ENCODE measurements at regions of chr1 and their contacts with region 1.

Region 1: DNA sequence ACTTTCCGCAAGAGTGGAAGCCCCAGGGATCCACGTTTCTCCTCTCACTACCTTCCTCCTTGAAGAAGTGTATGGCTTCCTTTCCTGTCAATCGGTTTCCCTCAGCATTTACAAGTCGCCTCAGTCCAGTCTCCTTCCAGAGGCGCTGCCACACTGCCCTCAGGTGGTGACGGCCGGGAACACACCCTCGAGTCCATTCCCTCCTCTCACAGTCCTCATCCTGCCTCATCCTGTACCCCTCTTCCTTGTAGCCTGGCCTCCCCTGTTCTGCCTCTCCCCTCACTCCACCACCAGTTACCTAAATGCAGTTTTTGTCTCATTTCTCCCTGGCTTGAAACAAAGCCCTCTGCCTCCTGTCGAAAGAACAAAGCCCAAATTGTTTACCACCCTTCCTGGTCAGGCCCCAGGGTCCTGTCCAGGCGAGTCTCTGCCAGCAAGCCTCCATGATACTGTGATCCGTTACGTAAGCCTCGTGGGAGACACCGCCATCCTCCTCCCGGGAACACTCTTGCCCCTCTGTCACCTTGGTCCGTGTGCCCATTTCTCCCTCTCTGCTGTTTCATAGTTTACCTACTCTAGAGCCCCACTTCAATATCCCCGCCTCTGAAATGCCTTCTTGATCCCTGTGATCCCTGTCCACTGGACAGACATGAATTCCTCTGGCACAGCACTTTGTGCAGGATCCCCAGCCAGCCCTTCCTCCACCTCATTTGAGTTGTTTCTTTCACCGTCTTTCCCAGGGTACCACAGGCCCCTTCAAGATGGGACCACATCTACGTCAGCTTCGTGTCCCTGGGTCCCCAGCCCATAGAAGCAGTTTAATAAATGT is 23.3 kb upstream of the LSM10 start:
- DNase-seq: peak; percentile 90
- H3K4me3 ChIP-seq: no peak overlapping the region
- H3K27ac ChIP-seq: no peak overlapping the region
- H3K4me1 ChIP-seq: peaks cover 3% of the 10 kb centered on the region
- H3K27me3 ChIP-seq: no peaks in the 10 kb centered on the region
- CTCF ChIP-seq: peak; percentile 96 to 97
- POLR2A ChIP-seq: no peak

Region 2: GRCh38 chr1:36099681-36100341 is 321.2 kb before region 1 on chr1:
- CTCF ChIA-PET with region 1: no interaction called
- POLR2A ChIA-PET with region 1: no interaction called
- dilution Hi-C with region 1: no loop called
- intact Hi-C with region 1: loop called (anchors 1 kb)
- DNase-seq: peak; percentile 65
- H3K4me3 ChIP-seq: no peak overlapping the region
- H3K27ac ChIP-seq: no peak overlapping the region
- H3K4me1 ChIP-seq: no peaks in the 10 kb centered on the region
- H3K27me3 ChIP-seq: no peaks in the 10 kb centered on the region
- CTCF ChIP-seq: peak; percentile 84
- POLR2A ChIP-seq: no peak

Region 3: DNA sequence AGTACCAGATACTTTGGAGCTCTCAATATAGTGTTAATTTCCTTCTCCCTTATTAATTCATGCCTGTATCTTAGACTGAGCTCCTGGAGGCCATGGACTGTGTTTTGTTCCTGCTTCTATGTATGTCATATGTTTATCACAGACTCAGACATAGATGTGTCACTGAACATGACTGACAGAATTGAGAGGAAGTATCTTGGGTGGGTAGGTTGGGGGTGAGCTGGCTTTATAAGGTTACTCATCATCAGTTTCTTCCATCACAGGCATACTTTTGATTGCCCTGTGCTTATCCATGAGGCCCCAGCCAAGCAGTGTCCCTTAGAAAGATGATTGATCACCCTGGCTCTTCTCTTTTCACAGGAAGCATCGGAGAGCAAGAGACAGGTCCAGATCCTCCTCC is 120.5 kb before region 1 on chr1:
- CTCF ChIA-PET with region 1: interaction called, 11 read pairs
- POLR2A ChIA-PET with region 1: no interaction called
- dilution Hi-C with region 1: no loop called
- intact Hi-C with region 1: no loop called
- DNase-seq: no peak
- H3K4me3 ChIP-seq: no peak overlapping the region
- H3K27ac ChIP-seq: peak overlapping the region; percentile 1
- H3K4me1 ChIP-seq: peaks cover 15% of the 10 kb centered on the region
- H3K27me3 ChIP-seq: no peaks in the 10 kb centered on the region
- CTCF ChIP-seq: no peak
- POLR2A ChIP-seq: no peak

Region 4: DNA sequence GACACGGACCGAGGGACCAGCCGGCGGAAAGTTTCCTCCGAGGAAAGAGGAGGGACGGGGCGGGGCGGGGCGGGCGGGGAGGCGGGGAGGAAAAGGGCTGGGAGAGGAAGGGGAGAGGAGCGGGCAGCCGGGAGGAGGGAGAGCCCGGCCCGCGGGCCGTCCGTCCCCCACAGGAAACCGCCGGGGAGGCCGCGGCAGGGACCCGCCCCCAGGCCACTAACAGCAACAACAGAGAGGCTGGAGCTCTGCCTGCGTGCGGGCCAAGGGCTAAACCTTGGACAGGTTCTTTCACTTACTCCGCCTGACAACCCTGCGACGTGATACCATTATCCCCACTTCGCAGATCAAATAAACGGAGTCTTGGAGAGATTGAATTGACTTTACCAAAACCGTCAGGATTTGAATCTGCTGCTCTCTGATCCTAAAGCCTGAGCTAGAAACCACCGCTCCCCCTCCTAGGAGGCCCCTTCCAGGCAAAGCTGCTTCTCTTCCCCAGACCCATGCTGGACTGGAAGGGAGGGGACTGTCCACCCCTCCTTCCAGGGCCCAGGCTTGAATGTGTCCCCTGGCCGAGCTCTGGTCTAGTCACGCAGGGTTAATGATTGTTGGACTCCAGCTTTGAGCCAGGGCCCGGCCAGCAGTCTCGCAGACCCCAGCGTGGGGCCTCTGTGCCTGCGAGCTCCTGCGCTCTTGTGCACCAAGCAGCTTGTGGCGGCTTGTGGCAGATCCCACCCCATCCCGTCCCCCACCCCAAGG is 97.3 kb before region 1 on chr1 and contains the start of gene EVA1B:
- CTCF ChIA-PET with region 1: no interaction called
- POLR2A ChIA-PET with region 1: no interaction called
- dilution Hi-C with region 1: no loop called
- intact Hi-C with region 1: loop called (anchors 1 kb)
- DNase-seq: peak; percentile 90
- H3K4me3 ChIP-seq: peak within 1 kb of the TSS; percentile 61 to 85 (median 71)
- H3K27ac ChIP-seq: peak within 1 kb of the TSS; percentile 62
- H3K4me1 ChIP-seq: peaks cover 15% of the 10 kb centered on the region
- H3K27me3 ChIP-seq: no peaks in the 10 kb centered on the region
- CTCF ChIP-seq: no peak
- POLR2A ChIP-seq: no peak
- total RNA-seq, gene EVA1B: 63.2 and 64.7 TPM in 2 replicates

Region 5: GRCh38 chr1:36350659-36351226 is 70.3 kb before region 1 on chr1:
- CTCF ChIA-PET with region 1: interaction called, 11 read pairs
- POLR2A ChIA-PET with region 1: no interaction called
- dilution Hi-C with region 1: no loop called
- intact Hi-C with region 1: no loop called
- DNase-seq: peak; percentile 85
- H3K4me3 ChIP-seq: no peak overlapping the region
- H3K27ac ChIP-seq: peak overlapping the region; percentile 89
- H3K4me1 ChIP-seq: peaks cover 49% of the 10 kb centered on the region
- H3K27me3 ChIP-seq: no peaks in the 10 kb centered on the region
- CTCF ChIP-seq: no peak
- POLR2A ChIP-seq: no peak

Region 6: GRCh38 chr1:36385410-36386257 is 35.4 kb before region 1 on chr1 and contains the start of gene STK40:
- CTCF ChIA-PET with region 1: interaction called, 4 read pairs
- POLR2A ChIA-PET with region 1: no interaction called
- dilution Hi-C with region 1: no loop called
- intact Hi-C with region 1: loop called (anchors 1 kb)
- DNase-seq: peak; percentile 99
- H3K4me3 ChIP-seq: peak within 1 kb of the TSS; percentile 80 to 90 (median 83)
- H3K27ac ChIP-seq: peak within 1 kb of the TSS; percentile 97
- H3K4me1 ChIP-seq: peaks cover 24% of the 10 kb centered on the region
- H3K27me3 ChIP-seq: no peaks in the 10 kb centered on the region
- CTCF ChIP-seq: no peak
- POLR2A ChIP-seq: no peak
- total RNA-seq, gene STK40: 35.2 and 36.8 TPM in 2 replicates

Measured in endothelial cell of umbilical vein (primary cell).